Cardiac septum (tissue), 1 donor: ENCODE measurements at regions of chr2 and their contacts with region 1.

Region 1: DNA sequence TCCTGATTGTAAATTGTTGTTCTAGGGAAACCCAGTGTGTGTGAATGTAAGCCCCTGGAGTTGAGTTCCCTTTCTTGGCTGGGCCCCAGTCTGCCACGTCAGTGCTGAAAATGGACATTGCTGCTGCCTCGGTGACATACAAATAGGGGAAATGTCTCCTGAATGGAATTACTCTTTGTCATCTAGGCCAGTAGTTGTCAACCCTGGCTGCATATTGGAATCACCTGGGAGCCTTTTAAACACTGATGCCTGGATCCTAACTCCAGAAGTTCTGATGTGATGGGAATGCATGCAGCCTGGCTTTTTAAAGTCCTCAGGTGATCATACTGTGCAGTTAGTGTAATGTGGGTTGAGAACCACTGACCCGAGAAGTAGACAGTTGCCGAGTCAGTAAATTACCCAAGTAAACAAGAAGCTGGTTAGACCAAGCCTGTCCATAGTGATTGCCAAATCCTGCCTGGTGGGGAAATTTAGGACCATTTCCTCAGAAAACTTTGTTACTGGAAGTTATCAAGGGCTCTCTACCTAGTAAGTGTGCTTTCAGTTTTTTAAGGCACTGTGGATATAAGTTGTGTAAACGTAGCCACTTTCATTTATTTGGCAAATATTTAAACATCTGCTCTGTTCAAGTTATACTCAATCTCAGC is 27.6 kb upstream of the IL1R1 start:
- DNase-seq: no peak

Region 2: GRCh38 chr2:101998896-101999789 is 115.8 kb before region 1 on chr2:
- intact Hi-C with region 1: no loop called
- DNase-seq: no peak

Region 3: GRCh38 chr2:102166189-102166845 is 51.3 kb after region 1 on chr2:
- intact Hi-C with region 1: loop called (anchors 5 kb)
- DNase-seq: no peak